ENCODE measurements at regions of chr19 and their contacts with region 1.

Region 1: DNA sequence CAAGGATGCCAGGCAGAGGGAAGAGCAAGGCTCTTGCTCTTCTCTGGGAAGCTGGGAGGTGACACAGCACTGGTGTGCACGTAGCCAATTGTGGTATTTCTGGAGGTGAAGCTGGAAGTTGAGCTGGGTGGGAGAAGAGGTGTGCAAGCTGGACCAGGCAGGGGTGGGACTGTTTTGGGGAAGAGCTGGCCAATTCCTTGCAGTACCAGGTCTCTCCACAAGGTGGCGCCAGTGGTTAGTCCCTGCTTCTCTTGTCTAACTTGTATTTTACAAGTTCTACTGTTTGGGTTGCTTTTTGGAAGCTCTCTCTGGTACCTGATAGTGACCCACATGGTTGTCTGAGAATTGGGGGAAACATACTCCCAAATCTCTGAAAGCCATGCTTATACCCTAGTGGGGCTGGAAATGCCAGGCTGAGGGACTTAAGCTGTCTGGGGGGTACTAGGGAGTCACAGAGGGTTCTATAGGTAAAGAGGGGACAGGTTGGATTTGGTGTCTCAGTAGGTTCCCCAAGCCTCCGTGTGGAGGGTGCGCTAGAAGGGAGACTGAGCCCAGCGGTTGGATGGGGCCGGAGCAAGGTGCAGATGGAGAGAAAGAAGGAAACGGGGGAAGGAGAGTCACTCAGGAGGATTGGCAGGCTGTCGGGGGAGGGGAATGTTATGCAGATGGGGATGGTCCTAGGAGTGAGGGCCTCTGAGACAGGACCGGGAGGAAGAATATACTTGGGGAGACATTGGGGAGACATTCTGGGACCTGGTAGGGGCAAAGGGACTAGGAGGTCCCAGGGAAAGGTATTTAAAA is 3.0 kb downstream of the HPN start:
- DNase-seq: peak; percentile 62
- H3K4me3 Mint-ChIP-seq: no peak overlapping the region
- H3K27ac Mint-ChIP-seq: no peak overlapping the region
- H3K4me1 Mint-ChIP-seq: peaks cover 26% of the 10 kb centered on the region
- H3K27me3 Mint-ChIP-seq: peaks cover 6% of the 10 kb centered on the region

Region 2: DNA sequence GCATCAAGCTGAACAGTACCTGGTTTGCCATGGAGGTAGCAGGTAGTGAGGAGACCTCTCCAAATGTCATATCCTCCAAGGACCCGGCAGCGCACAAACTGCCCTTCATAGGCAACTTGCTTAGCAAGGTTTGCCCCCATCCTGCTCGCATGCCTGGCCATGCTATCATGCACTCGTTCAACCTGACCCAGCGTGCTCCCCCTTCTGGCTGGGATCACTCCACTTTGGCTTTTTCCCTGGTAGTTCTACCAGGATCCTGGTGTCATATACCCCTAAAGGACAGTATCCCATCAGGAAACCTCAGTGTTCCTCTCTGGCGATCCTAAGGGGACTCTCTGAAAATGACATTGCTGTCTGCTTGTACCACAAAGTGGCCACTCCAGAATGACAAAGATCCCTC is 156.4 kb before region 1 on chr19:
- CTCF ChIA-PET with region 1: no interaction called
- POLR2A ChIA-PET with region 1: no interaction called
- DNase-seq: no peak
- H3K4me3 Mint-ChIP-seq: no peak overlapping the region
- H3K27ac Mint-ChIP-seq: no peak overlapping the region
- H3K4me1 Mint-ChIP-seq: no peaks in the 10 kb centered on the region
- H3K27me3 Mint-ChIP-seq: no peaks in the 10 kb centered on the region

Region 3: GRCh38 chr19:35055715-35056179 is 11.2 kb after region 1 on chr19:
- CTCF ChIA-PET with region 1: interaction called, 11 read pairs
- POLR2A ChIA-PET with region 1: no interaction called
- DNase-seq: no peak
- H3K4me3 Mint-ChIP-seq: no peak overlapping the region
- H3K27ac Mint-ChIP-seq: no peak overlapping the region
- H3K4me1 Mint-ChIP-seq: no peaks in the 10 kb centered on the region
- H3K27me3 Mint-ChIP-seq: peaks cover 5% of the 10 kb centered on the region

Region 4: DNA sequence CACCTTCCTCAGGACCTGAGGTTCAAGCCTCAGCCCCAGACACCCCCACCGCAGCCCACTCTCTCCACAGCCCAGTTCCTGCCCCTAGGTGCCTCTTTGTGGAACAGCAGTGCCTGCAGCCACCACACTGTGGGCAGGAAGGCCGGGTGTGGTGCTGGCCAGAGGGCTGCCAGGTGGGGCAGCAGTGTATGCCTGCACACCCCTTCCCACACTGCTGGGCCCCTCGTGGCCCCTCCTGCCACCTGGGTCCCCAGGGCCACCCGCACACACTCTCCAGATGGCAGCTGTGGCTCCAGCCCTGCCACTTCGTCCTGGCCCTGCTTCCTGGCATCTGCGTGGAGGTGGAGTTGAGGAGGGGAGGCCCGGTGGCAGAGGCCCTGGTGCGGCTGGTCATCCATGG is 32.1 kb after region 1 on chr19:
- CTCF ChIA-PET with region 1: no interaction called
- POLR2A ChIA-PET with region 1: no interaction called
- DNase-seq: no peak
- H3K4me3 Mint-ChIP-seq: no peak overlapping the region
- H3K27ac Mint-ChIP-seq: no peak overlapping the region
- H3K4me1 Mint-ChIP-seq: no peaks in the 10 kb centered on the region
- H3K27me3 Mint-ChIP-seq: no peaks in the 10 kb centered on the region

Measured in activated CD4-positive, alpha-beta T cell treated with anti-CD3 and anti-CD28 coated beads, Interleukin-2, amount 10 ng/mL, durations not matched to agents 7 days and 5 days (primary cell).